ENCODE measurements at regions of chr1 and their contacts with region 1.

Region 1: GRCh38 chr1:222240536-222241181 is 307.2 kb downstream of the HHIPL2 start:
- DNase-seq: peak; percentile 64
- H3K4me3 Mint-ChIP-seq: no peak overlapping the region
- H3K27ac Mint-ChIP-seq: peak overlapping the region; percentile 57
- H3K4me1 Mint-ChIP-seq: peaks cover 24% of the 10 kb centered on the region
- H3K27me3 Mint-ChIP-seq: no peaks in the 10 kb centered on the region
- CTCF ChIP-seq: no peak

Region 2: DNA sequence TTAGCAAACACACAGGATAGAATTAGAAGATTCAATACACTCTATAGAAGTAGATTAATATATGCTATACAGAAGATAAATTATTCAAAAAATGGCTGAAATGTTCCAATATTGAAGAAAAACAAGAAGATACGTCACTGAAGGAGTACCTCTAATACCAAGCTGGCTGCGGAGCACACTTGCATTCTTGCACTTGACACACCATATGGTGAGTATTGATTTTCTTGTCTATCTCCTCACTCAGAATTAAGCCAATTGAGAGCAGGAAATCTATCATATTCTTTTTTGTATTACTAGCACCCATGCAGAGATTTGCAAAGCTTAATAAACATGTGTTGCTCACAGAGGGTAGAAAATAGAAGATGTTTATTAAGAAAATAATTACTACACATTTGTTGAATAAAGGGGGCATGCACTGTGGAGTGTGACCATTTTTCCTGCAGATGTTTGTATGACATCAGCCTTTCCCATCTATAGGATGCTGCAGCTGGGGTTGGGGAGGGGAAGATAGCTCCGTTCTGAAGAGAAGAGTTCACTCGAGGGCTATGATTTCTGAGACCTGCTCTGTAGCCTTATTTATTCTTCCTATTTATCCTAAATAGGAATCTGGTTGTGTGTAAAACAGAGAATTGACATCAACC is 10.9 kb before region 1 on chr1:
- CTCF ChIA-PET with region 1: no interaction called
- POLR2A ChIA-PET with region 1: interaction called, 18 read pairs
- intact Hi-C with region 1: no loop called
- DNase-seq: no peak
- H3K4me3 Mint-ChIP-seq: no peak overlapping the region
- H3K27ac Mint-ChIP-seq: no peak overlapping the region
- H3K4me1 Mint-ChIP-seq: peaks cover 7% of the 10 kb centered on the region
- H3K27me3 Mint-ChIP-seq: no peaks in the 10 kb centered on the region
- CTCF ChIP-seq: no peak

Measured in MCF 10A (cell line).